ENCODE measurements at regions of chr6 and their contacts with region 1.

Region 1: DNA sequence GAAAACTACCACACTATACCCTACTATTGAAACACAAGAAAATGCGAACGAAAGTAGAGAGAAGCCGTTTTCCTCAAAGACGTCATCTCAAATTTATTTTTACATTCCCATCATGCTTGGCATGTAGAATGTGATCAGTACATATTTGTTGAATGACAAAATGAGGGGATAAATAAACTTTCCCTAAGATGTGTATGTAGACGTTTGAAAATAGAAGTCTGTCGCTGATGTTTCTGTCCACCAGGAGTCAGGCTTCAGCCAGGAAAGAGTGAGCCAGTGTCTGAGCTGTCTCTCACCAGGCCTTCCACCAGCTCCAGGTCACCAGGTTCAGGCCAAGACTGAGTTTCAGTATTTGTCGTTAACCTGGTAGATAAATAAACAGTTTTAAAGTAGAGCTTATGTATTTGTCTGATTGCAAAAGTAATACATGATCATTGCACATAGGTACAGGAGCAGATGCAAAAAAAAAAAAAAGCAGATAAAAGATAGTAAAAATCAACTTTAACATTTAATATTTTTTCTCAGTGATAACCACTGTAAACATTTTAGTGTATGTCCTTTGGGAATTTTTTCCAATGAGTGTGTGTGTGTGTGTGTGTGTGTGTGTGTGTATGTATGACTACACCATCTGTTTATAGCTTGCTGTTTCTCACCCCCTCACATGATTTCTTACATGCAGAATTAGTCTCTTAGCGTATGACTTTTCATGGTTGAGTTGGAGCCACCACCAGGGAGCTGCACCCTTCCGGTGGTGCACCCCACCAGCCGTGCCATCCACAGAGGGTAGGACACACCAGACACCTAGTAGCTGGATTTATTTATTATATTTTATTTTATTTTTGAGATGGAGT is 26.2 kb downstream of the WRNIP1 start:
- DNase-seq: peak; percentile 22 to 76 (median 42)
- ATAC-seq: peak; percentile 86
- H3K4me3 ChIP-seq: no peak overlapping the region
- H3K4me3 Mint-ChIP-seq: peak overlapping the region; percentile 49
- H3K27ac ChIP-seq: no peak overlapping the region
- H3K27ac Mint-ChIP-seq: peak overlapping the region; percentile 70
- H3K4me1 ChIP-seq: peaks cover 22% of the 10 kb centered on the region
- H3K4me1 Mint-ChIP-seq: peaks cover 37% of the 10 kb centered on the region
- H3K27me3 ChIP-seq: no peaks in the 10 kb centered on the region
- H3K27me3 Mint-ChIP-seq: no peaks in the 10 kb centered on the region
- CTCF ChIP-seq: peak; percentile 68

Region 2: GRCh38 chr6:2738373-2738979 is 52.9 kb before region 1 on chr6:
- CTCF ChIA-PET with region 1: no interaction called
- POLR2A ChIA-PET with region 1: interaction called, 3 read pairs
- intact Hi-C with region 1: loop called in 1 of 2 experiments (anchors 1 kb)
- DNase-seq: peak; percentile 21 to 75 (median 43)
- ATAC-seq: peak; percentile 75
- H3K4me3 ChIP-seq: no peak overlapping the region
- H3K4me3 Mint-ChIP-seq: no peak overlapping the region
- H3K27ac ChIP-seq: no peak overlapping the region
- H3K27ac Mint-ChIP-seq: no peak overlapping the region
- H3K4me1 ChIP-seq: no peaks in the 10 kb centered on the region
- H3K4me1 Mint-ChIP-seq: no peaks in the 10 kb centered on the region
- H3K27me3 ChIP-seq: no peaks in the 10 kb centered on the region
- H3K27me3 Mint-ChIP-seq: peaks cover 4% of the 10 kb centered on the region
- CTCF ChIP-seq: peak; percentile 65

Region 3: GRCh38 chr6:2831392-2831791 is 40.0 kb after region 1 on chr6:
- CTCF ChIA-PET with region 1: no interaction called
- POLR2A ChIA-PET with region 1: no interaction called
- intact Hi-C with region 1: loop called in 1 of 2 experiments (anchors 2 kb)
- DNase-seq: no peak
- ATAC-seq: no peak
- H3K4me3 ChIP-seq: no peak overlapping the region
- H3K4me3 Mint-ChIP-seq: no peak overlapping the region
- H3K27ac ChIP-seq: no peak overlapping the region
- H3K27ac Mint-ChIP-seq: no peak overlapping the region
- H3K4me1 ChIP-seq: no peaks in the 10 kb centered on the region
- H3K4me1 Mint-ChIP-seq: peaks cover 7% of the 10 kb centered on the region
- H3K27me3 ChIP-seq: no peaks in the 10 kb centered on the region
- H3K27me3 Mint-ChIP-seq: no peaks in the 10 kb centered on the region
- CTCF ChIP-seq: no peak

Region 4: GRCh38 chr6:2911171-2911570 is 119.8 kb after region 1 on chr6:
- CTCF ChIA-PET with region 1: interaction called, 3 read pairs
- POLR2A ChIA-PET with region 1: no interaction called
- intact Hi-C with region 1: loop called (anchors 1 to 2 kb)
- DNase-seq: no peak
- ATAC-seq: no peak
- H3K4me3 ChIP-seq: no peak overlapping the region
- H3K4me3 Mint-ChIP-seq: no peak overlapping the region
- H3K27ac ChIP-seq: no peak overlapping the region
- H3K27ac Mint-ChIP-seq: no peak overlapping the region
- H3K4me1 ChIP-seq: peaks cover 15% of the 10 kb centered on the region
- H3K4me1 Mint-ChIP-seq: peaks cover 25% of the 10 kb centered on the region
- H3K27me3 ChIP-seq: no peaks in the 10 kb centered on the region
- H3K27me3 Mint-ChIP-seq: no peaks in the 10 kb centered on the region
- CTCF ChIP-seq: no peak

Region 5: GRCh38 chr6:2931970-2932748 is 140.8 kb after region 1 on chr6:
- CTCF ChIA-PET with region 1: interaction called, 11 read pairs
- POLR2A ChIA-PET with region 1: no interaction called
- intact Hi-C with region 1: loop called (anchors 1 to 5 kb)
- DNase-seq: peak; percentile 77 to 93 (median 86)
- ATAC-seq: peak; percentile 98
- H3K4me3 ChIP-seq: no peak overlapping the region
- H3K4me3 Mint-ChIP-seq: peak overlapping the region; percentile 0
- H3K27ac ChIP-seq: no peak overlapping the region
- H3K27ac Mint-ChIP-seq: no peak overlapping the region
- H3K4me1 ChIP-seq: peaks cover 16% of the 10 kb centered on the region
- H3K4me1 Mint-ChIP-seq: peaks cover 18% of the 10 kb centered on the region
- H3K27me3 ChIP-seq: no peaks in the 10 kb centered on the region
- H3K27me3 Mint-ChIP-seq: no peaks in the 10 kb centered on the region
- CTCF ChIP-seq: peak; percentile 96

Region 6: DNA sequence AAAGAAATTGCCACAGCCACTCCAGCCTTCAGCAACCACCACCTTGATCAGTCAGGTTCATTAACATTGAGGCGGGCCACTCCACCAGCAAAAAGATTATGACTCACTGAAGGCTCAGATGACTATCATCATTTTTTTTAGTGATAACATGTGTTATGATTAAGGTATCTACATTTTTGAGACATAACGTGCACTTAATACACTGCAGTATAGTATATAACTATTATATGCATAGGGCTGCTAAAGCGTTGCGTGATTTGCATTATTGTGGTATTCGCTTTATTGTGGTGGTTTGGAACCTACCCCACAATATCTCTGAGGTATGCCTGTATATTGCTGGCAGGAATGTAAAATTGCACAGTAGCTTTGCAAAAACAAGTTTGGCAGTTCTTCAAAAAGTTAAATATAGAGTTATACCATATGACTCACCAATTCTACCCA is 270.2 kb after region 1 on chr6:
- CTCF ChIA-PET with region 1: no interaction called
- POLR2A ChIA-PET with region 1: no interaction called
- intact Hi-C with region 1: loop called (anchors 5 kb)
- DNase-seq: no peak
- ATAC-seq: no peak
- H3K4me3 ChIP-seq: no peak overlapping the region
- H3K4me3 Mint-ChIP-seq: no peak overlapping the region
- H3K27ac ChIP-seq: no peak overlapping the region
- H3K27ac Mint-ChIP-seq: no peak overlapping the region
- H3K4me1 ChIP-seq: peaks cover 15% of the 10 kb centered on the region
- H3K4me1 Mint-ChIP-seq: peaks cover 34% of the 10 kb centered on the region
- H3K27me3 ChIP-seq: no peaks in the 10 kb centered on the region
- H3K27me3 Mint-ChIP-seq: no peaks in the 10 kb centered on the region
- CTCF ChIP-seq: no peak